CD4-positive, alpha-beta memory T cell (primary cell): ENCODE measurements at regions of chr3 and their contacts with region 1.

Region 1: GRCh38 chr3:43345877-43346276 is 59.5 kb downstream of the SNRK start:
- DNase-seq: no peak
- H3K4me3 ChIP-seq: no peak overlapping the region
- H3K4me3 Mint-ChIP-seq: peak overlapping the region in 7 of 8 donors; percentile 23 to 76 (median 61)
- H3K27ac ChIP-seq: no peak overlapping the region
- H3K27ac Mint-ChIP-seq: peak overlapping the region; percentile 90 to 98 (median 95)
- H3K4me1 ChIP-seq: peaks cover 84% of the 10 kb centered on the region
- H3K4me1 Mint-ChIP-seq: peaks cover 52 to 84% (median 68%) of the 10 kb centered on the region in 4 donors
- H3K27me3 ChIP-seq: no peaks in the 10 kb centered on the region
- H3K27me3 Mint-ChIP-seq: no peaks in the 10 kb centered on the region

Region 2: GRCh38 chr3:43180027-43180426 is 165.8 kb before region 1 on chr3:
- CTCF ChIA-PET with region 1: no interaction called
- POLR2A ChIA-PET with region 1: interaction called, 13 read pairs
- intact Hi-C with region 1: no loop called
- DNase-seq: peak; percentile 51 to 69 (median 65)
- H3K4me3 ChIP-seq: peak overlapping the region in 1 of 2 donors; percentile 20
- H3K4me3 Mint-ChIP-seq: peak overlapping the region; percentile 52 to 87 (median 78)
- H3K27ac ChIP-seq: peak overlapping the region; percentile 27
- H3K27ac Mint-ChIP-seq: peak overlapping the region; percentile 83 to 98 (median 95)
- H3K4me1 ChIP-seq: peaks cover 46% of the 10 kb centered on the region
- H3K4me1 Mint-ChIP-seq: peaks cover 40 to 72% (median 63%) of the 10 kb centered on the region in 4 donors
- H3K27me3 ChIP-seq: no peaks in the 10 kb centered on the region
- H3K27me3 Mint-ChIP-seq: no peaks in the 10 kb centered on the region

Region 3: DNA sequence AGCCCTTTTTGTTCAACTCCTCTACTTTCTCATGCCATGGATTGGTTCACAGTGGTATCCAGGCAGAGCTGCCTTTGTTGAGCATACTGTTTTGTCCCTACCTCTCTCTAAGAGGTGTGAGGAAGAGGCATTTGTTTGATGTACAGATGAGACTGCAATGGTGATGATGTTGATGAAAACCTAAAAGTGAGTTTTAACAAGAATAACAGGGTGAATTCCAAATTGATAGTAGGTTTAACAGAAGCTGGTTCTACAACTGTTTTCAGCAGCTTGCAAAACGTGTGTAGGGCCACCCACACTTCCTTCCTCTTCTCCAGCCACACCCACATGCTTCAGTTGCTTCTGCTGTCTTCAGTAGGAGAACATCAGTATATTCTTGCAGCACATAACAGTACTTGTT is 49.3 kb before region 1 on chr3:
- CTCF ChIA-PET with region 1: interaction called, 12 read pairs
- POLR2A ChIA-PET with region 1: interaction called, 70 read pairs
- intact Hi-C with region 1: no loop called
- DNase-seq: peak; percentile 76 to 86 (median 83)
- H3K4me3 ChIP-seq: peak overlapping the region in 1 of 2 donors; percentile 16
- H3K4me3 Mint-ChIP-seq: peak overlapping the region; percentile 67 to 86 (median 79)
- H3K27ac ChIP-seq: peak overlapping the region; percentile 59
- H3K27ac Mint-ChIP-seq: peak overlapping the region; percentile 87 to 97 (median 94)
- H3K4me1 ChIP-seq: peaks cover 97% of the 10 kb centered on the region
- H3K4me1 Mint-ChIP-seq: peaks cover 59 to 88% (median 72%) of the 10 kb centered on the region in 4 donors
- H3K27me3 ChIP-seq: no peaks in the 10 kb centered on the region
- H3K27me3 Mint-ChIP-seq: no peaks in the 10 kb centered on the region

Region 4: GRCh38 chr3:43317461-43318316 is 28.2 kb before region 1 on chr3:
- CTCF ChIA-PET with region 1: interaction called, 3 read pairs
- POLR2A ChIA-PET with region 1: interaction called, 10 read pairs
- intact Hi-C with region 1: loop called (anchors 5 kb)
- DNase-seq: no peak
- H3K4me3 ChIP-seq: no peak overlapping the region
- H3K4me3 Mint-ChIP-seq: peak overlapping the region in 7 of 8 donors; percentile 6 to 69 (median 43)
- H3K27ac ChIP-seq: no peak overlapping the region
- H3K27ac Mint-ChIP-seq: peak overlapping the region; percentile 17 to 95 (median 72)
- H3K4me1 ChIP-seq: peaks cover 65% of the 10 kb centered on the region
- H3K4me1 Mint-ChIP-seq: peaks cover 50 to 78% (median 66%) of the 10 kb centered on the region in 4 donors
- H3K27me3 ChIP-seq: no peaks in the 10 kb centered on the region
- H3K27me3 Mint-ChIP-seq: no peaks in the 10 kb centered on the region

Region 5: DNA sequence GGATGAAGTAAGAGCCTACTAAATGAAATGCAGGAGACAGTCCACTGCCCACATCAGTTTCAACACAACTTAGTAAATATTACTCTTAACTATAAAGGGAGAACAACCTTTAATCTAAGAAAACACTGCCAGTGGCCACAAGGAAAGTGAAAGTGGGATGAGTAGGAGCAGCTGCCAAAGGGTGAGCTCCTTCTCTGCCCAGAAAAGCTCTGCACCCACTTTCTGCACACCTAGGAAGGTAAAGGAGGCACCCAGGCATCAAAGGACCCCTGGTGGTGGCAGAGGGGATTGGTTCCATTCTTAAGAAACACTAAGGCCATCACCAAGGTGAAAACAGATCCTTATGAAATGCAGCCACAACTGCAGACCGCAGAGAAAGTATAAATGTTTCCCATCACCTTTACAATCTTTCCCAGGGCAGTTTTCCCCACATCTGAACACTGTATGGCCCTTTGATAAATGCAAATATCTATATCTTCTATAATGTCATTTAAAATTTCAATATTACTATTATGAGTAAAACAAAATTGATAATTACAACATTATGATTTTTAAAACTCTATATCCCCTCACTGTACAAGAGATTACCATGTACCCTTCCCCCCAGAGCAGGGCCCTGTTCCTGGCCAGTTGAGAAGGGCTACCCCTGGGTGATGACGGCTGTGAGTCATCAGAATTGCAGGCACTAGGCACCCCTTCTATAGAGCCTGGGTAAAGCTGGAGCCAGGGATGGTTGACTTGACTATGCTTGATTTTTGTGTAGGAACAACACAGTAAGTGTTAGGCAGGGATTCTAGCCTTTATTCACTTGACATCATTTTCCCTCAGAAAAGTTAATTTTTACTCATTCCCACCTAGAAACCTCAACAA is 32.4 kb after region 1 on chr3:
- CTCF ChIA-PET with region 1: interaction called, 7 read pairs
- POLR2A ChIA-PET with region 1: interaction called, 9 read pairs
- intact Hi-C with region 1: loop called (anchors 1 kb)
- DNase-seq: peak; percentile 71 to 76 (median 73)
- H3K4me3 ChIP-seq: no peak overlapping the region
- H3K4me3 Mint-ChIP-seq: peak overlapping the region in 2 of 8 donors; percentile 11 to 14
- H3K27ac ChIP-seq: no peak overlapping the region
- H3K27ac Mint-ChIP-seq: peak overlapping the region in 6 of 7 donors; percentile 38 to 84 (median 69)
- H3K4me1 ChIP-seq: peaks cover 9% of the 10 kb centered on the region
- H3K4me1 Mint-ChIP-seq: peaks cover 9 to 26% (median 17%) of the 10 kb centered on the region in 4 donors
- H3K27me3 ChIP-seq: no peaks in the 10 kb centered on the region
- H3K27me3 Mint-ChIP-seq: no peaks in the 10 kb centered on the region

Region 6: DNA sequence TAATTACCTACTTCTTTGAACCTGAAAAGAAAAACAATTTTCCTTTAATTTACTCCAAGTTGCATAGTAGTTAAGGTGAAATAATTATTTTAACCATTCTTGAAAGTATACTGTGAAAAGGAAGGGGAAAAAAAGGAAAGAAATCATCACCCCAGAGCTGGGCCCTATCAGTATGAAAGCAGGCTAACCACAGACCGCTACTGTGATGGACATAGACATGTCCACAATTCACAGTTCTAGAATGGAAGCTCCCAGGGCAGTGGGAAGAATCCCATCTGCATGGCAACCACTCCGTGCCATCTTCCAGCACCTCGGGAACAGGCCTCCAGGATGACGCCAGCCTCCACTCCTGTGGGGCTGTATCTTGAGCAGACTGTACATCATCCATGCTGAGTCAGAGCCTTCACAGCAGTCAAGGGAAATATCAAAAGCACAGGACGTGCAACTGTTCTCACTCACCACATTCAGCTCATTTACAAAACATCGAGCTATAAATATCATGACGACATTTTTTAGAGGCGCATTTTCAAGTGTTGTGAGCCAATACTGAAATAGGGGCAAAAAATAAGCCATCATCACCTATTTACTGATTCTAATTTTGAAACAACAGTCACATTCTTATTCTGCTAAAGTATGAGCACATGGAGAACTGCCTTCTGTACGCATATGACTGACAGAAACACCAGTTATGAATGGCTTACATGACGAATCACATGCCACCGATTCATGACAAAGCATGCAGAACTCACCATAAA is 60.2 kb after region 1 on chr3:
- CTCF ChIA-PET with region 1: no interaction called
- POLR2A ChIA-PET with region 1: no interaction called
- intact Hi-C with region 1: no loop called
- DNase-seq: no peak
- H3K4me3 ChIP-seq: no peak overlapping the region
- H3K4me3 Mint-ChIP-seq: no peak overlapping the region
- H3K27ac ChIP-seq: no peak overlapping the region
- H3K27ac Mint-ChIP-seq: no peak overlapping the region
- H3K4me1 ChIP-seq: no peaks in the 10 kb centered on the region
- H3K4me1 Mint-ChIP-seq: peaks cover 0 to 4% (median 0%) of the 10 kb centered on the region in 4 donors
- H3K27me3 ChIP-seq: no peaks in the 10 kb centered on the region
- H3K27me3 Mint-ChIP-seq: peaks cover 0 to 4% of the 10 kb centered on the region in 2 donors

Region 7: GRCh38 chr3:43503067-43503728 is 157.3 kb after region 1 on chr3:
- CTCF ChIA-PET with region 1: interaction called, 27 read pairs
- POLR2A ChIA-PET with region 1: interaction called, 8 read pairs
- intact Hi-C with region 1: no loop called
- DNase-seq: peak in 4 of 5 donors; percentile 54 to 61 (median 60)
- H3K4me3 ChIP-seq: no peak overlapping the region
- H3K4me3 Mint-ChIP-seq: no peak overlapping the region
- H3K27ac ChIP-seq: no peak overlapping the region
- H3K27ac Mint-ChIP-seq: peak overlapping the region in 5 of 7 donors; percentile 24 to 88 (median 63)
- H3K4me1 ChIP-seq: peaks cover 39% of the 10 kb centered on the region
- H3K4me1 Mint-ChIP-seq: peaks cover 32 to 52% (median 41%) of the 10 kb centered on the region in 4 donors
- H3K27me3 ChIP-seq: no peaks in the 10 kb centered on the region
- H3K27me3 Mint-ChIP-seq: no peaks in the 10 kb centered on the region